A673 (cell line): ENCODE measurements at regions of chr3 and their contacts with region 1.

Region 1: GRCh38 chr3:24145981-24146822 is 201.1 kb downstream of the NR1D2 start:
- DNase-seq: peak; percentile 33
- H3K4me3 ChIP-seq: no peak overlapping the region
- H3K27ac ChIP-seq: no peak overlapping the region
- H3K4me1 ChIP-seq: peaks cover 5% of the 10 kb centered on the region
- H3K27me3 ChIP-seq: no peaks in the 10 kb centered on the region
- CTCF ChIP-seq: no peak

Region 2: GRCh38 chr3:25156626-25157025 is 1010.4 kb after region 1 on chr3:
- CTCF ChIA-PET with region 1: no interaction called
- POLR2A ChIA-PET with region 1: interaction called, 16 read pairs
- intact Hi-C with region 1: no loop called
- DNase-seq: no peak
- H3K4me3 ChIP-seq: no peak overlapping the region
- H3K27ac ChIP-seq: no peak overlapping the region
- H3K4me1 ChIP-seq: no peaks in the 10 kb centered on the region
- H3K27me3 ChIP-seq: no peaks in the 10 kb centered on the region
- CTCF ChIP-seq: no peak